Ovary (tissue), 10 donors: ENCODE measurements at regions of chr11 and their contacts with region 1.

Region 1: DNA sequence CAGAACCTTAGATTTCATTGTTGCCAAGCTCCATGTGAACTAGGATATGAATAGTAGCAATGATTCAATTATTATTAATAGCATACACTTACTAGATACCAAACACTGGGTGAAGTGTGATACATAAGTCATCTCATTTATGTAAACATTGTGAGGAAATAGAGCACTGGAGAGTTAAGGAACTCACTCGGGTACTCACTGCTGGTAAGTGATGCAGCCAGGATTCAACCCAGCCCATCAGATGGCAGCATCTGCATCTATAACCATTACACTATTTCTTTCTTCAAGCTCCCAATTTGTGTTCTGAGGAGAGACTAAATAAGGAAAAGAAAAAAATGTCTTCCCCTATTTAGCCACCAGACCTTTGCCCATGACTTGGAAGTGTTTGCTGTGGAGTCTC is 10.2 kb upstream of the ALG8 start:
- DNase-seq: peak in 1 of 5 donors; percentile 56
- H3K4me3 ChIP-seq: no peak overlapping the region
- H3K27ac ChIP-seq: no peak overlapping the region
- H3K4me1 ChIP-seq: peaks cover 1% of the 10 kb centered on the region
- H3K27me3 ChIP-seq: no peaks in the 10 kb centered on the region
- CTCF ChIP-seq: peak in 1 of 3 donors; percentile 46
- EP300 ChIP-seq: no peak
- POLR2A ChIP-seq: no peak

Region 2: GRCh38 chr11:77619576-77620198 is 530.0 kb before region 1 on chr11:
- intact Hi-C with region 1: no loop called
- DNase-seq: no peak
- H3K4me3 ChIP-seq: no peak overlapping the region
- H3K27ac ChIP-seq: no peak overlapping the region
- H3K4me1 ChIP-seq: peaks cover 2% of the 10 kb centered on the region
- H3K27me3 ChIP-seq: no peaks in the 10 kb centered on the region
- CTCF ChIP-seq: peak; percentile 33 to 74 (median 68)
- EP300 ChIP-seq: no peak
- POLR2A ChIP-seq: no peak

Region 3: GRCh38 chr11:77994412-77995362 is 155.0 kb before region 1 on chr11 and contains the start of gene INTS4:
- intact Hi-C with region 1: no loop called
- DNase-seq: peak; percentile 98 to 99 (median 99)
- H3K4me3 ChIP-seq: peak within 1 kb of the TSS; percentile 57
- H3K27ac ChIP-seq: peak within 1 kb of the TSS; percentile 44 to 85
- H3K4me1 ChIP-seq: peaks cover 5% of the 10 kb centered on the region
- H3K27me3 ChIP-seq: no peaks in the 10 kb centered on the region
- CTCF ChIP-seq: no peak
- EP300 ChIP-seq: peak; percentile 56
- POLR2A ChIP-seq: peak; percentile 45
- total RNA-seq, gene INTS4: 26.2 to 37.7 (median 30.5) TPM

Region 4: GRCh38 chr11:78080818-78081495 is 68.7 kb before region 1 on chr11:
- intact Hi-C with region 1: no loop called
- DNase-seq: no peak
- H3K4me3 ChIP-seq: no peak overlapping the region
- H3K27ac ChIP-seq: no peak overlapping the region
- H3K4me1 ChIP-seq: peaks cover 17% of the 10 kb centered on the region
- H3K27me3 ChIP-seq: no peaks in the 10 kb centered on the region
- CTCF ChIP-seq: no peak
- EP300 ChIP-seq: no peak
- POLR2A ChIP-seq: no peak

Region 5: DNA sequence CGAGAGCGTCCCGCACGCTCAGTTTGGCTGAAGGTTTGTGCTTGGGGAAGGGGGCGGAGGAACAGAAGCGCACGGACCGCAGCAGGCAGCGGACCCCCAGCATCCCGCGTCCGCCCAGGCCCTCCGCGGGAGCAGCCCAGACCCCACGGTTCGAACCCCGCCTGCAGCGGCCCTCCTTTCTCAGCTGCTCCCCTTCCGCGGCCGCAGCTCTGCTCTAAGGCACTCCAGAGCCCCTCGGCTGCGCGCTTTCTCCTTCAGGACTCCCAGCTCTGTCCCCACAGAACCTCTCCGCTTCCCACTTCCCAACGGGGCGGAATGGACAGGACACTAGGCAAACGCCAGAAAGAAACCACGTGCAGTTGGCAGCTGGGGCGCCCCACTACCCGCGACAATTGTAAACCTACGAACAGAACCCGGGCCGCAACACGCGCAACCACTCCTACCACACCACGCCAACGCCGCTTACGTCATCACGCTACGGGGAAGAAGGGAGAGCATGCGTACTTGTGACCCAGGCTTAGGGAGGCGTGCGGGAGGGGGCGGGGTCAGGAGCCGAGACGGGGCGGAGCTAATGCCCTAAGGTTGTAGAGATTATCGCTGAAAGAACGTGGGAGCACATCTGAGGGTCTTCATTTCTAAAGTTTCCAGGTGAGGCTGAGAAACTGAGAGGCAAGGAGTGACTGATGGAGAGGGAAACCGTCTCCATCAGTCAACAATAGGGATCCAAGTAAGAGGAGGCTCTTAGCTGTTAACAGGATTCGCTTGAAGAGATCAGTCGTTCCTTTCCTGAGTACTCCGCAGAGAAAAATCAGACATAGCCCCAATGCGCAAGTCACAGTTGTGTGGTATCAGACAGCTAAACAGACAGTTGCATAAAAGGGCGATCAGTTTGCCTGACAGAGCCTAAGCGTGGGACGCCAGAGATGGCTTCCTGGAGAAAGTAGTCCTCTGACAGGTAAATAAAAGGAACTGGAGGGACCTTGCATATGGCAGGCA is 425.0 kb after region 1 on chr11 and contains the start of gene NARS2:
- intact Hi-C with region 1: loop called in 1 of 4 experiments (anchors 5 kb)
- DNase-seq: peak; percentile 97 to 98 (median 98)
- H3K4me3 ChIP-seq: peak within 1 kb of the TSS; percentile 51
- H3K27ac ChIP-seq: peak within 1 kb of the TSS; percentile 55 to 83
- H3K4me1 ChIP-seq: peaks cover 6% of the 10 kb centered on the region
- H3K27me3 ChIP-seq: no peaks in the 10 kb centered on the region
- CTCF ChIP-seq: peak in 1 of 3 donors; percentile 8
- EP300 ChIP-seq: no peak
- POLR2A ChIP-seq: peak; percentile 97
- total RNA-seq, gene NARS2: 13.2 to 24.5 (median 17.3) TPM